Dorsolateral prefrontal cortex (tissue), 120 donors: ENCODE measurements at regions of chr17 and their contacts with region 1.

Region 1: DNA sequence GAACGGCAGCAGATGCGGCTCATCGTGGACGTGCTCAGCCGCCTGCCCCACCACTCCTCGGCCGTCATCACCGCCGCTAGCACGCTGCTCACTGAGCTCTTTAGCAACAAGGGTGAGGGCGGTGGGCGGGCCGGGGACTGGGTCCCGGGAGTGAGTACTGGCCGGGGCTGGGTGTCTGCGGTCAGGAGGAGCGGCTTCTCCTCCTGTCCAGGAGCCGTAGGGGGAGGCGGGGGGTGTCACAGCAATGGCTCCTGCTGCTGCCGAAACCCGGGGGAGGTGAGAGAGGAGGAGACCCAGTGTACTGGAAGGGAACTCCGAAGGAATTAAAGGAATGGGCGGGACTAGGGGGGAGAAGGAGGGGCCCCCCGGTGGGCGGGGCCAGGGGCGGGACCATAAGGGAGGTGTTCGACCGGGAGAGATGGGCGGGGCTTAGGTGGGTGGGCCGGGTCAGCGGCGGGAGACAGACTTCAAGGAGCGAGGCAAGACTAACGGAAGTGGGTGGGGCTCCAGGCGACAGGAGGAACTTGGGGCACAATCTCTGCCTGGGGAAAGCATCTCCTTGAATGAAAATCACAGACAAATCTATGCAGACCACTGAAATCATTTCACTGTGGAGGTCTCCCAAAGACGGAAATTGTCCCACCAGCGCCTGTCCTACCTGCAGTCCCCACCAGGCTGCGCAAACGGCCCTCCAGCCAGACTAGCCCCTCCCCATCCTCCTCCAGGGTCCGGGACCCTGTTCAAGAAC is 2.4 kb downstream of the NAGS start:
- DNase-seq: peak in 8 of 10 donors; percentile 62 to 86 (median 74)
- H3K4me3 ChIP-seq: peak overlapping the region; percentile 28 to 70 (median 50)
- H3K27ac ChIP-seq: peak overlapping the region in 9 of 59 donors; percentile 19 to 61 (median 46)
- H3K27me3 ChIP-seq: peaks cover 0 to 48% (median 25%) of the 10 kb centered on the region in 45 donors
- CTCF ChIP-seq: peak in 31 of 56 donors; percentile 10 to 50 (median 25)

Region 2: DNA sequence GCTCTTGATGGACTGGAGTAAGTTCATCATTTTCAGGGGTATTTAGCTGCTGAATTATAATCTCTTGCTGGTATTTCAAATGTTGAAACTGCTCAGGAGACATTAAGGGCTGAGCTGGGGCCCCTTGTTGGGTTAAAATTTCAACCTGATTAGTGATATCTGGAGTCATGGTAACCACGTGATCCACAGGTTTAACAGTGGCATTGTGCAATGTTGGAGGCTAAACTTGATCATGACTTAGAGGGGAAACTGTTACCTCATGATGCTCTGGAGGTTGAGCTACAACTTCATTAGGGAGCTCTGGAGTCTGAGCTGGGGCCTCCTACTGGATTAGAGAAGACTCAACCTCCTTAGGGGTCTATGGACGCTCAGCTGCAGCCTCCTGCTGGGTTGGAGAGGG is 82.2 kb before region 1 on chr17:
- intact Hi-C with region 1: loop called in 1 of 2 experiments (anchors 5 kb)
- DNase-seq: no peak
- H3K4me3 ChIP-seq: no peak overlapping the region
- H3K27ac ChIP-seq: no peak overlapping the region
- H3K27me3 ChIP-seq: peaks cover 0 to 21% (median 0%) of the 10 kb centered on the region in 45 donors
- CTCF ChIP-seq: no peak

Region 3: DNA sequence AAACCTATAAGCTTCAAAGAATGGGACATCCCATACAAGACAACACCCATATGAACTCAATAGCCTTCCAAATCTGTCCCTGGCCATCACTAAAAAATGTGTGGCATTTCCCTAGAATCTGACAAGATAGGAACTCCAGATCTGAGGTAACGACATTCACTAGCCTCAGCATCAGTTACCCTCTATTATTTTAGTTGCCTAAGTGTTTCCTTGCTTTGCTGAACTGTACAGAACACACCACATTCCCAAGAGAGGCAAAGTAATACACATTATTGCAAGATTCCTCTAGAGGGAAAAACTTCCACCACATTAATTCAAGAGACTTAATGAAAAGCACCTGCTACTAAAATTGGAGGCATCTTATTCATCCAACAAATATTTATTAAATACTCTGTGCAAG is 54.7 kb after region 1 on chr17:
- intact Hi-C with region 1: loop called in 1 of 2 experiments (anchors 2 kb)
- DNase-seq: no peak
- H3K4me3 ChIP-seq: no peak overlapping the region
- H3K27ac ChIP-seq: no peak overlapping the region
- H3K27me3 ChIP-seq: no peaks in the 10 kb centered on the region
- CTCF ChIP-seq: no peak

Region 4: GRCh38 chr17:44155488-44155887 is 148.7 kb after region 1 on chr17:
- intact Hi-C with region 1: no loop called
- DNase-seq: no peak
- H3K4me3 ChIP-seq: no peak overlapping the region
- H3K27ac ChIP-seq: no peak overlapping the region
- H3K27me3 ChIP-seq: no peaks in the 10 kb centered on the region
- CTCF ChIP-seq: no peak